HEK293T (cell line): ENCODE measurements at regions of chr1 and their contacts with region 1.

Region 1: GRCh38 chr1:167268398-167268787 is 47.7 kb downstream of the POU2F1 start:
- DNase-seq: no peak

Region 2: GRCh38 chr1:167210966-167211674 is 57.3 kb before region 1 on chr1:
- CTCF ChIA-PET with region 1: interaction called, 14 read pairs
- POLR2A ChIA-PET with region 1: no interaction called
- DNase-seq: no peak

Region 3: DNA sequence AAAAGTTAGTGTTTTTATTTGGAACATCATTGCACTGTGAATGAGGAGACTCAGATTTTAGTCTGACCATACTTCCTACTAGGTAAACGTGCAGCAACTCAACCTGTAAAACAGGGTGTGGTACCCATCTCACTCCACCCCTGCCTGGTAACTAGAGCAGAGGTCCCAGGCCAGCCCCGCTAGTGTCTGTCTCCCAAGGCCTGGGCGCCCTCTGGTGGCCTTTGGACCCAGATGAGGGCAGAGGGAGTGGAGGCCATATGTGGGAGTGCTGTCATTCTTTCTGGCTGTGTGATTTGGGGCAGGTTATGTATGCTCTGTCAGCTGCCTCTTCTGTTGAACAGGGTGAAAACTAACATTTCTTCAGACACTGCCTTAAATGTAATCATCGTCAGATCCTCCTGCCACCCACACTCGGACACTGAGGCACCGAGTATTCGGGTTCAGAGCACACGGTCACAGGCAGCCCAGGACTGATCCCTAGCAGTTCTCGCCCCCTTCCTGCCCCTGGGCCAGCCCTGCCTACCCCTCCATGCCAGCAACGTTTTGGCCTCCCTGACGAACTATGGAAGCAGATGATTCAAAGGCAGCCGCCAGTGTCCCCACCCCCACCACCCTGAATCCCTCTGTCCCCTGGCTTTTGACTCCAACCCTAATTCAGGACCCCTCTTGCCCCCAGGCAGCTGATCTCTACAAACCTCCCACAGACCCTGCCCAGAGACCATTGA is 173.9 kb after region 1 on chr1:
- CTCF ChIA-PET with region 1: interaction called, 11 read pairs
- POLR2A ChIA-PET with region 1: no interaction called
- DNase-seq: peak; percentile 92